Activated B cell treated with CpG ODN at 0.5 μM for 24 hours (primary cell): ENCODE measurements at regions of chr5 and their contacts with region 1.

Region 1: GRCh38 chr5:71586941-71587765 is at the start of gene MCCC2:
- DNase-seq: peak; percentile 93
- ATAC-seq: peak; percentile 98
- H3K4me3 Mint-ChIP-seq: peak within 1 kb of the TSS; percentile 97
- H3K27ac Mint-ChIP-seq: peak within 1 kb of the TSS; percentile 99
- H3K4me1 Mint-ChIP-seq: peaks cover 43% of the 10 kb centered on the region
- H3K27me3 Mint-ChIP-seq: no peaks in the 10 kb centered on the region
- CTCF ChIP-seq: no peak
- total RNA-seq, gene MCCC2: 68.5 and 70.4 TPM in 2 replicates

Region 2: GRCh38 chr5:71455427-71456361 is 131.5 kb before region 1 on chr5 and contains the start of gene BDP1:
- CTCF ChIA-PET with region 1: no interaction called
- POLR2A ChIA-PET with region 1: interaction called, 11 read pairs
- intact Hi-C with region 1: loop called (anchors 1 kb)
- DNase-seq: peak; percentile 96
- ATAC-seq: peak; percentile 84
- H3K4me3 Mint-ChIP-seq: peak within 1 kb of the TSS; percentile 97
- H3K27ac Mint-ChIP-seq: peak within 1 kb of the TSS; percentile 97
- H3K4me1 Mint-ChIP-seq: peaks cover 23% of the 10 kb centered on the region
- H3K27me3 Mint-ChIP-seq: peaks cover 7% of the 10 kb centered on the region
- CTCF ChIP-seq: no peak
- total RNA-seq, gene BDP1: 46.2 and 50.4 TPM in 2 replicates

Region 3: GRCh38 chr5:71601222-71602041 is 14.3 kb after region 1 on chr5:
- CTCF ChIA-PET with region 1: interaction called, 7 read pairs
- POLR2A ChIA-PET with region 1: interaction called, 17 read pairs
- intact Hi-C with region 1: loop called (anchors 1 kb)
- DNase-seq: no peak
- ATAC-seq: peak; percentile 87
- H3K4me3 Mint-ChIP-seq: no peak overlapping the region
- H3K27ac Mint-ChIP-seq: peak overlapping the region; percentile 53
- H3K4me1 Mint-ChIP-seq: peaks cover 10% of the 10 kb centered on the region
- H3K27me3 Mint-ChIP-seq: no peaks in the 10 kb centered on the region
- CTCF ChIP-seq: no peak

Region 4: GRCh38 chr5:71873191-71873591 is 286.0 kb after region 1 on chr5:
- CTCF ChIA-PET with region 1: no interaction called
- POLR2A ChIA-PET with region 1: no interaction called
- intact Hi-C with region 1: no loop called
- DNase-seq: no peak
- ATAC-seq: no peak
- H3K4me3 Mint-ChIP-seq: no peak overlapping the region
- H3K27ac Mint-ChIP-seq: no peak overlapping the region
- H3K4me1 Mint-ChIP-seq: no peaks in the 10 kb centered on the region
- H3K27me3 Mint-ChIP-seq: peaks cover 9% of the 10 kb centered on the region
- CTCF ChIP-seq: no peak